Activated CD4-positive, alpha-beta T cell treated with anti-CD3 and anti-CD28 coated beads, Interleukin-2, amount 10 ng/mL, durations not matched to agents 7 days and 5 days (primary cell): ENCODE measurements at regions of chr2 and their contacts with region 1.

Region 1: DNA sequence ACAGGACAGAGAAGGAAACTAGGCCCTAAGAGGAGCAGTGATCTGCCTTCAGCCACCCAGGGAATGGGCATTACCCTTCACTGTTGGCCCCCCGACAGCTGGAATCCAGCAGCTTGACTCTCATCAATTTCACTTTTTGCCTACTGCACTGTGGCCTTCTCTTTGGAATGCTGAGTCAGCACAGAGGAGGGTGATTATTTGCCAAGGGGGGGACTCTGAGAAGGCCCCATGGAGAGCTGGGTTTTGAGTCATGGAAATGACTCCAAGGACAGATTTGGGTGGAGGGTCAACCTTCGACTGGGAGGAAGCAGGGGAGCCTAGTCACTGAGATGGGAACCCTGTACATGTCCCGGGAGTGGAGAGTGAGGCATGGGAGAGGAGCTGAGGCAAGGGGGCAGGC is 38.1 kb upstream of the NTSR2 start:
- DNase-seq: no peak
- H3K4me3 Mint-ChIP-seq: no peak overlapping the region
- H3K27ac Mint-ChIP-seq: no peak overlapping the region
- H3K4me1 Mint-ChIP-seq: no peaks in the 10 kb centered on the region
- H3K27me3 Mint-ChIP-seq: peaks cover 7% of the 10 kb centered on the region

Region 2: DNA sequence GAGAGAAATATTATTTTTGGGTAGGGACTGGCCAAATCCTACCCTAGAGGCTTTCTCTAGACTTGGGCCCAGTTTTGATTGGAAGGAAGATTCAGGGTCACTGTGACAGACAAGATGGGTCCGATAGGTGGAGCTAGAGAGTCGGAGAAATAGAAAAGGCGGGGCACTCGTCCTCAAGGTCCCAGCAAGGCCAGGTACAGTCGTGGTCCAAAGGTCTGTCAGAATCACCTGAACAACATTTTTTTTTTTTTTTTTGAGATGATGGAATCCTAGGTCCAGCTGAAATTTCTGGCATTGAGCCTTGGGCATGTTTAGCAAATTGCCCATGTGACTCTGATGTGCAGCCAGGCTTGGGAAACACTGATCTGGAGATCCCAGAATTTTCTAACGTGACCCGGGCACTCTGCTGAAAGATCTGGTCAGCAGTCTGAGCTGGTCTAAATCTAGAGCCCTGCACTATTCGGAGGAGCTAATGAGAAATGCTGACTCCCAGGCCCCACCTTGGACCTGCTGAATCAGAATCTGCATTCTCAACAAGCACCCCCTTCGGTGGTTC is 15.1 kb before region 1 on chr2:
- CTCF ChIA-PET with region 1: interaction called, 11 read pairs
- POLR2A ChIA-PET with region 1: no interaction called
- DNase-seq: peak; percentile 78
- H3K4me3 Mint-ChIP-seq: no peak overlapping the region
- H3K27ac Mint-ChIP-seq: no peak overlapping the region
- H3K4me1 Mint-ChIP-seq: peaks cover 15% of the 10 kb centered on the region
- H3K27me3 Mint-ChIP-seq: peaks cover 3% of the 10 kb centered on the region

Region 3: GRCh38 chr2:11796190-11797171 is 88.4 kb after region 1 on chr2:
- CTCF ChIA-PET with region 1: no interaction called
- POLR2A ChIA-PET with region 1: no interaction called
- DNase-seq: no peak
- H3K4me3 Mint-ChIP-seq: no peak overlapping the region
- H3K27ac Mint-ChIP-seq: peak overlapping the region; percentile 34
- H3K4me1 Mint-ChIP-seq: peaks cover 9% of the 10 kb centered on the region
- H3K27me3 Mint-ChIP-seq: no peaks in the 10 kb centered on the region

Region 4: GRCh38 chr2:11835403-11835802 is 127.3 kb after region 1 on chr2:
- CTCF ChIA-PET with region 1: no interaction called
- POLR2A ChIA-PET with region 1: no interaction called
- DNase-seq: no peak
- H3K4me3 Mint-ChIP-seq: no peak overlapping the region
- H3K27ac Mint-ChIP-seq: no peak overlapping the region
- H3K4me1 Mint-ChIP-seq: peaks cover 26% of the 10 kb centered on the region
- H3K27me3 Mint-ChIP-seq: peaks cover 53% of the 10 kb centered on the region